GM12878 (cell line): ENCODE measurements at regions of chr10 and their contacts with region 1.

Region 1: GRCh38 chr10:4813023-4813422 is 13.0 kb upstream of the AKR1E2 start:
- DNase-seq: no peak
- ATAC-seq: no peak
- H3K4me3 ChIP-seq: no peak overlapping the region
- H3K27ac ChIP-seq: no peak overlapping the region
- H3K4me1 ChIP-seq: no peaks in the 10 kb centered on the region
- H3K27me3 ChIP-seq: peaks cover 0 to 2% of the 10 kb centered on the region in 2 experiments; a peak in 1 of 4 replicates
- CTCF ChIP-seq: no peak
- EP300 ChIP-seq: no peak
- POLR2A ChIP-seq: no peak
- RAD21 ChIP-seq: no peak

Region 2: DNA sequence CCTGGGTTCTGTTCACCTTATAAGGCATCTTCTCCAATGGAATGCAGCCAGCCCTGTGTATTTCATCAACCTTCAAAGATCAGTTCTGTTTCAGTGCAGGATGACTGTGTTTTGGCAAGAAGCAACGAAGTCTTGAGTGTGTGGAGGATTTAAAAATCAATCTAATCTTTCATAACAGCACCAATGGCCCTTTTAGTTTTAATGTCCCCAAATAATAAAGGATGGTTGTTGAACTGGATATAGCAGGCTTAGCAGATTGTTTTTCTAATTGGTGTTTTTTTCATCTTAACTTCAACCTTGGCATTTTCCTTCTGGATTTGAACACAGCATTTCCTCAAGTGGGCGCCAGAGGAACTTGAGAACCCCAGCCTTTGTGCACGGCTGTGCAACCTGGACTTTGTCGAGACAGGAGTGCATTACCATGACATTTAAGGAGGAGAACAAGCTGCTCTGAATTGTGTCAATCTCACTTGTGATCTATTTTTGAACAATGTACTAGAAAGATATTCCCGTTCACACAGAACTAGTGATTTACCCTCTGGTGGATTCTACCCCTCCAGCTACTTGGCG is 300.3 kb before region 1 on chr10:
- CTCF ChIA-PET with region 1: no interaction called
- POLR2A ChIA-PET with region 1: no interaction called
- RAD21 ChIA-PET with region 1: no interaction called
- SMC1A ChIA-PET with region 1: no interaction called
- in situ Hi-C with region 1: no loop called
- intact Hi-C with region 1: no loop called
- DNase-seq: no peak
- ATAC-seq: no peak
- H3K4me3 ChIP-seq: no peak overlapping the region
- H3K27ac ChIP-seq: no peak overlapping the region
- H3K4me1 ChIP-seq: peaks cover 9% of the 10 kb centered on the region
- H3K27me3 ChIP-seq: no peaks in the 10 kb centered on the region
- CTCF ChIP-seq: peak in 2 of 3 experiments; percentile 24 to 27; a peak in 2 of 6 replicates
- EP300 ChIP-seq: no peak
- POLR2A ChIP-seq: no peak
- RAD21 ChIP-seq: no peak

Region 3: GRCh38 chr10:4790045-4790444 is 23.0 kb before region 1 on chr10:
- CTCF ChIA-PET with region 1: interaction called, 10 read pairs
- POLR2A ChIA-PET with region 1: no interaction called
- RAD21 ChIA-PET with region 1: no interaction called
- SMC1A ChIA-PET with region 1: no interaction called
- in situ Hi-C with region 1: no loop called
- intact Hi-C with region 1: no loop called
- DNase-seq: no peak
- ATAC-seq: no peak
- H3K4me3 ChIP-seq: no peak overlapping the region
- H3K27ac ChIP-seq: no peak overlapping the region
- H3K4me1 ChIP-seq: no peaks in the 10 kb centered on the region
- H3K27me3 ChIP-seq: no peaks in the 10 kb centered on the region
- CTCF ChIP-seq: no peak
- EP300 ChIP-seq: no peak
- POLR2A ChIP-seq: no peak
- RAD21 ChIP-seq: no peak

Region 4: GRCh38 chr10:4826666-4827324 is 13.8 kb after region 1 on chr10:
- CTCF ChIA-PET with region 1: interaction called, 20 read pairs
- POLR2A ChIA-PET with region 1: no interaction called
- RAD21 ChIA-PET with region 1: interaction called, 4 read pairs
- SMC1A ChIA-PET with region 1: interaction called, 3 read pairs
- in situ Hi-C with region 1: no loop called
- intact Hi-C with region 1: no loop called
- DNase-seq: no peak
- ATAC-seq: no peak
- H3K4me3 ChIP-seq: no peak overlapping the region
- H3K27ac ChIP-seq: no peak overlapping the region
- H3K4me1 ChIP-seq: no peaks in the 10 kb centered on the region
- H3K27me3 ChIP-seq: peaks cover 2 to 3% of the 10 kb centered on the region in 2 experiments; a peak in 3 of 4 replicates
- CTCF ChIP-seq: no peak
- EP300 ChIP-seq: no peak
- POLR2A ChIP-seq: no peak
- RAD21 ChIP-seq: no peak

Region 5: DNA sequence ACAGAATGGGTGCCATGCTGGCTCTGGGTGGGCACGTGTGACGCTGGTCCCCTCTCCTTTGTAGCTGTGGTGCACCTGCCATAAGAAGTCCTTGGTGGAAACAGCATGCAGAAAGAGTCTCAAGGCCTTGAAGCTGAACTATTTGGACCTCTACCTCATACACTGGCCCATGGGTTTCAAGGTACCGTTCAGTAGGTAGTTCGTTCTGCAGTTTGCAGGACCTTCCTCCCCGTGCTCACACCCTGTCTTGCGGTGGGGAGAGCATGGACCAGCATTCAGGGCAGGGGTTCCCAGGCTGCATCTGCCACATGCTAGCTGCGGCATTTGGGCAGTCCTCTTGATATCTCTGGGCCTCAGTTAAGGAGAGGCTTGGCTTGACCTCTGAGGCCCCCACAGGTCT is 20.3 kb after region 1 on chr10:
- CTCF ChIA-PET with region 1: interaction called, 34 read pairs
- POLR2A ChIA-PET with region 1: no interaction called
- RAD21 ChIA-PET with region 1: interaction called, 4 read pairs
- SMC1A ChIA-PET with region 1: interaction called, 5 read pairs
- in situ Hi-C with region 1: no loop called
- intact Hi-C with region 1: no loop called
- DNase-seq: no peak
- ATAC-seq: no peak
- H3K4me3 ChIP-seq: no peak overlapping the region
- H3K27ac ChIP-seq: no peak overlapping the region
- H3K4me1 ChIP-seq: no peaks in the 10 kb centered on the region
- H3K27me3 ChIP-seq: no peaks in the 10 kb centered on the region; a peak in 2 of 4 replicates
- CTCF ChIP-seq: no peak
- EP300 ChIP-seq: no peak
- POLR2A ChIP-seq: no peak
- RAD21 ChIP-seq: no peak

Region 6: GRCh38 chr10:4839401-4839800 is 26.4 kb after region 1 on chr10:
- CTCF ChIA-PET with region 1: interaction called, 34 read pairs
- POLR2A ChIA-PET with region 1: no interaction called
- RAD21 ChIA-PET with region 1: no interaction called
- SMC1A ChIA-PET with region 1: interaction called, 5 read pairs
- in situ Hi-C with region 1: no loop called
- intact Hi-C with region 1: no loop called
- DNase-seq: no peak
- ATAC-seq: no peak
- H3K4me3 ChIP-seq: no peak overlapping the region
- H3K27ac ChIP-seq: no peak overlapping the region
- H3K4me1 ChIP-seq: no peaks in the 10 kb centered on the region
- H3K27me3 ChIP-seq: no peaks in the 10 kb centered on the region; a peak in 1 of 4 replicates
- CTCF ChIP-seq: no peak
- EP300 ChIP-seq: no peak
- POLR2A ChIP-seq: no peak
- RAD21 ChIP-seq: no peak

Region 7: DNA sequence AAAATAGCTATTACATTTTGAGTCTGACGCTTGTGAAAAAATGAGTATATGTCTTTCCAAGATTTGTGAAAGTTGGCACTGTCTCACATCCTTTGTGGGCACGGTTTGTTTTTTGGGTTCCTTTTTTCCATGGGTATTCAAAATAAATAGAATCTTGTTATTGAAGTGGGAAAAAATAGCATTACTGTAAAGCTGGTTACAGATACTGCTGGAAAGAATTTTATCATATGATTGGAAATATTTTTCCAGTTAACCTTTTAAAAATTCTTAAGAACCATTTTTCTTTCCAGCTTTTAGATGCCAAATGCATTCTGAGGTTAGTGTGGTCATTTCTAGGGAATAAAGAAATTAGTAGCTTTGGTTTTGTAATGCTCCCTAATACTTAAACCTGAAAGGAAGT is 610.7 kb after region 1 on chr10:
- CTCF ChIA-PET with region 1: interaction called, 13 read pairs
- POLR2A ChIA-PET with region 1: no interaction called
- RAD21 ChIA-PET with region 1: interaction called, 3 read pairs
- SMC1A ChIA-PET with region 1: interaction called, 3 read pairs
- in situ Hi-C with region 1: no loop called
- intact Hi-C with region 1: no loop called
- DNase-seq: no peak
- ATAC-seq: no peak
- H3K4me3 ChIP-seq: no peak overlapping the region
- H3K27ac ChIP-seq: no peak overlapping the region
- H3K4me1 ChIP-seq: no peaks in the 10 kb centered on the region
- H3K27me3 ChIP-seq: no peaks in the 10 kb centered on the region
- CTCF ChIP-seq: no peak
- EP300 ChIP-seq: no peak
- POLR2A ChIP-seq: no peak
- RAD21 ChIP-seq: no peak